ENCODE measurements at regions of chr6 and their contacts with region 1.

Region 1: DNA sequence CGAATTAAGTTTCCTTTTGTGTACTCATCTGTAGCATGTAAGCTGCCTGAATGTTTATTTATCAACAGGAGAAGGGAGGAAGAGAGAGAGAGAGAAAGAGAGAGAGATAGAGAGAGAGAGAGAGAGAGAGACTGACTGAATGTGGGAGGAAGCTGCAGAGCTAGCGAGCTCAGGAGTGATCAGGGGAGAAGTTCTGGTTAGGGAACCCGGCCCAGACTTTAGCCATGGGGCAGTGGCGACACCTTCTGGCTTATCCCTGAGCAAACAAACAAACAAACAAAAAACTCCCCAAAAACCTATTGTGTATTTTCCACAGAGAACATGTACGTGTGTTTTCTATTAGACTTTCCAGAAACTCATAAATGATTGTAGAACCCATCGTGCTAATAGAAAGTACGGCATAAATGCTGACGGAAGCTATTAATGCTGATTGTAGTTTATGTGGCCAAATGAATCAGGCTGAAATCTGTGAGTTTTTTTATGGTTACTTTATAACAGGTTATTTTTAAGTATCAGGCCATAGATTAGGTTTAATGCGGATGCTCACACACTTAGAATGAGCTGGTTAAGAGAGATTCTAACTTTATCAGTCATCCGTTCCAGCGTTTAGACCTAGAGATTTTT is 92.8 kb downstream of the CLIC5 start:
- H3K4me3 ChIP-seq: no peak overlapping the region
- H3K27ac ChIP-seq: no peak overlapping the region
- H3K4me1 ChIP-seq: no peaks in the 10 kb centered on the region
- CTCF ChIP-seq: peak; percentile 84

Region 2: GRCh38 chr6:44593539-44593944 is 1329.3 kb before region 1 on chr6:
- CTCF ChIA-PET with region 1: interaction called, 25 read pairs
- POLR2A ChIA-PET with region 1: no interaction called
- H3K4me3 ChIP-seq: no peak overlapping the region
- H3K27ac ChIP-seq: no peak overlapping the region
- H3K4me1 ChIP-seq: no peaks in the 10 kb centered on the region
- CTCF ChIP-seq: peak; percentile 41; the same call in 1 of the 2 replicates

Region 3: DNA sequence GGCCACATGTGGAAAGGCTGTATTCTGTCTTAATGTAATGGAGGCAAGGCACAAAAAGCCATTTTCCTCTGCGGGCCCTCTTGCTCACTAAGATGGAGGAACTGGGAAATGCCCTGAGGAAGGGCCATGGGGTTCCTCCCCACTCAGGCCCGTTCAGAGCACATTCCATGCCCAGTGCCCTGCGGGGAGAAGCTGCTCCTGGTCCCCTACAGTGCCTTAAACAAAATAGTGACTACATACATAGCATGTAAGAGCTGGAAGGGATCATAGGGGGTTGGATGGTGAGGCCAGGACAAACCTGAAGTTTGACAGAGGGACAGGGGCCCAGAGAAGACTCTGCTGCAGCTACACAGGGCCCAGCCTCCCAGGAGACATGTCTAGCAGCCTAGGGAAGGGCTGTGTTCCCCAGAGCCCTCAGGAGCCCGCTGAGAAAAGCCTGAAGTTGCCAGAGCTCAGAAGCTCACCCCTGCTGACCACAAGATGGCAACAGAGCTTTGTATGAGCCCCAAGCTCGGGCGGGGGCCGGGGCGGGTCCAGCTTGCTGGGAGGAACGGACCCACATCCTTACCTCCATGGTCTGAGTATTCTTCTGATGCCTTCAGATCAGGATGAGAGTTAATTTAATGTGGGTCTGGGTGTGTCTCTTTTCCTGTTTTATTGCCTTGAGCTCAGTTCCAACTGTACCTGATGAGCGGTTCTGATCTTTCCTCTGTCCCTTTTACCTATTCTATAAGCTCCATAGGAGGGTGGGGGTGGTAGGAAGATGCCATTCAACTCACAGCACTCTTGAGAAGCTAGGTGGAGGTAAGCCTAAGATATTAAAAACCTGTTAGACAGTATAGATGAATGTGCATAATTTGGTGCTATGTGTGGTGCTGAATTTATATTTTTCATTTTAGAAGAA is 1292.5 kb before region 1 on chr6:
- CTCF ChIA-PET with region 1: interaction called, 60 read pairs
- POLR2A ChIA-PET with region 1: no interaction called
- H3K4me3 ChIP-seq: no peak overlapping the region
- H3K27ac ChIP-seq: no peak overlapping the region
- H3K4me1 ChIP-seq: no peaks in the 10 kb centered on the region
- CTCF ChIP-seq: peak; percentile 54; the same call in 1 of the 2 replicates

Region 4: GRCh38 chr6:44655412-44656342 is 1267.2 kb before region 1 on chr6:
- CTCF ChIA-PET with region 1: interaction called, 22 read pairs
- POLR2A ChIA-PET with region 1: no interaction called
- H3K4me3 ChIP-seq: no peak overlapping the region
- H3K27ac ChIP-seq: no peak overlapping the region; the same call in 1 of the 2 replicates
- H3K4me1 ChIP-seq: peaks cover 12% of the 10 kb centered on the region
- CTCF ChIP-seq: peak; percentile 88

Region 5: DNA sequence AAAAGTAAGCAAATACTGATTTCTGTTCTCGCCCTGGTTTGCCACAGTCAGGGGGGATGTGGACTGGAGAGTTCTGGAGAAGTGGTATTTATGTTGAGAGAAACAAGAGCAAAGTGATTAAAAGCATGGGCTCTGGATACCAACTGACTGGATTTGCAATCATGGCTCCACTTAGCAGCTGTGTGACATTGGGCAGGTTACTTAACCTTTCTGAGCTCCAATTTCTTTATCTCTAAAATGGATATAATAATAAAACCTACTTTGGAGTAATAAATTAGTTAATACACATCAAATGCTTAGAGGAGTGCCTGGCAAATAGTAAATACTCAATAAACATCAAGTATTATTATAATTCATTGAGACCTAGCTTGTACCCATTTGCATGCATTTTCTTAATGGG is 18.9 kb before region 1 on chr6:
- CTCF ChIA-PET with region 1: interaction called, 11 read pairs
- POLR2A ChIA-PET with region 1: no interaction called
- H3K4me3 ChIP-seq: no peak overlapping the region
- H3K27ac ChIP-seq: no peak overlapping the region
- H3K4me1 ChIP-seq: no peaks in the 10 kb centered on the region
- CTCF ChIP-seq: no peak

Region 6: GRCh38 chr6:45911691-45912090 is 11.1 kb before region 1 on chr6:
- CTCF ChIA-PET with region 1: interaction called, 25 read pairs
- POLR2A ChIA-PET with region 1: interaction called, 3 read pairs
- H3K4me3 ChIP-seq: no peak overlapping the region
- H3K27ac ChIP-seq: no peak overlapping the region
- H3K4me1 ChIP-seq: no peaks in the 10 kb centered on the region
- CTCF ChIP-seq: no peak

Region 7: GRCh38 chr6:46098678-46099077 is 175.8 kb after region 1 on chr6:
- CTCF ChIA-PET with region 1: no interaction called
- POLR2A ChIA-PET with region 1: no interaction called
- H3K4me3 ChIP-seq: no peak overlapping the region
- H3K27ac ChIP-seq: no peak overlapping the region
- H3K4me1 ChIP-seq: no peaks in the 10 kb centered on the region; the same call in 1 of the 2 replicates
- CTCF ChIP-seq: no peak